ENCODE measurements at regions of chr7 and their contacts with region 1.

Region 1: DNA sequence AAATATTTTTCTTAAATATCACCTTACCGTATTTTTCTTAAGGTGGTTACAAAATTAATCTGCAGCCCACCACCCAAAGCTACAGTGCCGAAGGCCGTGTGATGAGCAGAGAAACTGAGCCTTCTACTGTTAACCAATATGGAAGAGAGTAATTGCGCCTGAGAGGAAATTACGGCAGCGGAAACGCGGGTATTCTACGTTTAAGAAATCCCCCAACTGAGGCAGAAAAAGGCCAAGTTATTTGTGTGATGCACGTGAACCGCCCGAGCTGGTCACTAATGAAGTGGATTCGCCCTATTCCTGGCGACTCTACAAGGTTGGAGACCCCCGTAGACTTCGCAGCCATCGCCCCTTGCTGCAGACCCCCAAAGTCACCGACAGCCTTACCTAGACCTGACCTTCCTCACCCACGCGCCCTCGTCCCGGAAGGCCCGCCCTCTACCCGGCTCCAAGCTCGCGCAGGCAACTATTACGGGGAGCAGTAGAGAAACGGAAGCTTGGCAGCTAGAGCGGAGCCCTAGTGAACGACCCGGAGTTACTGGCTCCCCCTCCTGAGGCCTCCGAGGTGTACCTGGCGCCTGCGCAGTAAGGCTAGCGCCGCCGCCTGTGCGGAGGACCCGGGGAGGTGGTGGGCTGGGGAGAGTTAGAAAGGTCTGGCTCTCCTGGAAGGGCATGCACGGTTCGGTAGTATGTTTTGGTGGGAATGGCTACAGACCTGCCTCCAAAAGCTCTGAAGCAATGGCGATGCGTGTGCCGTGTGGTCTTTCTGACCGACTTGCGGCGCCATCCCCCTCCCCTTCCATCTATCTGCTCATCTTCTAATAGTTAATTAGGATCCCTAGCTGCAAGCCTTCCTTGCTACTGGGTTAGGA is at the start of gene MRPS33:
- DNase-seq: peak; percentile 97
- ATAC-seq: peak; percentile 91
- H3K4me3 Mint-ChIP-seq: peak within 1 kb of the TSS; percentile 96
- H3K27ac Mint-ChIP-seq: peak within 1 kb of the TSS; percentile 99
- H3K4me1 Mint-ChIP-seq: peaks cover 32% of the 10 kb centered on the region
- H3K27me3 Mint-ChIP-seq: peaks cover 9% of the 10 kb centered on the region
- total RNA-seq, gene MRPS33: 101 to 104 TPM

Region 2: DNA sequence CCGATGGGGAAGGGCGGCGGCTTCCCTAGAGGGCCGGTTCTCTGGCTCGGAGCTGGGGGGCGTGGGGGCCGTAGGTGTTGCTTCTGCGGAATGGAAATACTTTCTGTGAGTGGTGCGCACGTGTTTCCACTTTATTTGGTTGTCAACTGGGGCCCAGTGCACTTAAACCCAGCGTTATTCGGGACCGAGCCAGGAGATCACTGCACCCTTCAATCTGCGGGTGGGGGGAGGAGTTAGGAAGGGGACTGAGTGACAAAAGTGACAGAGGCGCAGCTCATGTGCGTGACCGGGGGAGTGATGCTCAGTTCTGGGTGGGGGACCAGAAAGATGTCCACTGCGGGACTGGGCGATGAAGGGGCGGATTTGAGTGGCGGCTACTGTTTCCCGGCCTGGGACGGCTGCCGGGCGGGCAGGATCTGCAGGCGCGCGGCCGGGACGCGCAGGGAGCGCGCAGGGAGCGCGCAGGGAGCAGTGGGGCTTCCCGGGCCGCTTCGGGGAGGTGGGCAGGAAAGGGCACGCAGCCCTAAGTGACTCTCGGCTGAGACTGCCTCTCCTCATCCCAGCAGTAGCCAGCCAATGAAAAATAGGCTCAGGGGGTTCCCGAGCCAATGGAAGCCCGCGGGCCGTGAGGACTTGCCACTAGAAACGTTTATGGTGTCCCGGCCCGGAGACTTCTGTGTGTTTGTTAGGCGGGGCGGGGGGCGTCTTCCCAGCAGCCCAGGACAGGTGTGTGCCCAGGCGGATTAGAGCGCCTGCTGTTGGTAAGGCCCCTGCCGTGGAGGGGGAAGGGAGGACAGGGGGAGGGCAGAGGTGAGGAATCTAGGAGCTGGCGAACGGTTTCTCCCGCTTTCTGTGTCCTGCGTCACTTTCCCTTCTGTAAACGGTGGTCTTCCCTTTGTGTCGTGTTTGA is 783.6 kb before region 1 on chr7:
- CTCF ChIA-PET with region 1: no interaction called
- POLR2A ChIA-PET with region 1: no interaction called
- intact Hi-C with region 1: loop called in 1 of 2 experiments (anchors 1 kb)
- DNase-seq: peak; percentile 86
- ATAC-seq: peak; percentile 65
- H3K4me3 Mint-ChIP-seq: peak overlapping the region; percentile 99
- H3K27ac Mint-ChIP-seq: peak overlapping the region; percentile 99
- H3K4me1 Mint-ChIP-seq: peaks cover 45% of the 10 kb centered on the region
- H3K27me3 Mint-ChIP-seq: no peaks in the 10 kb centered on the region

Region 3: DNA sequence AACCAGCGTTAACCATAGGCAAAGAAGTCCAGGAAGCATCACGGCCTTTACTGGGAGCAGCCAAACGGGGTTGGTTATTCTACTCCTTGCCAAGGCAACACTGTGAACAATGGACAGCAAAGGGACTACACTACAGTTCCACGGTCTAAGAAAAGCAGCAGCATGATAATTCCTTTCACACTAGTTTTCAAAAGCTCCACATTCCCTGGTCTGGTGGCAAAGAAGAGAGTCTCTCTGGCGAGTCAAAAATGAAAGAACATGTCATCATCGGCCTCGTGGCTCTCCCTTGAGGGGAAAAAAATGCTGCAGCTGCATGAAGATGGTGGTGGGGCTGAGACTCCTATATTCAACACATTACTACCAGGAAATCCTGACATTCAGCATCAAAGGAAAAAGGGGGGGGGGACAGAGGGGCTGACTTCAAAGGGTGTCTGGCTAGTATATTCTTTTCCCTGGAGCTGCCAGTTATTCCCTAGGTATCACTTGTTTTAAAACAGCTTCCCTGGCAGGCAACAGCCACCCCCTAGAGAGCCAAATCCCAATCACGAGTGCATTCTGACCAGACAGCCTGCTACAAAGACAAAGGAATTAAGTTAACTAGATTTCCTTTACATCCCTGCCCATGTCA is 665.5 kb before region 1 on chr7:
- CTCF ChIA-PET with region 1: no interaction called
- POLR2A ChIA-PET with region 1: no interaction called
- intact Hi-C with region 1: no loop called
- DNase-seq: peak; percentile 18
- ATAC-seq: no peak
- H3K4me3 Mint-ChIP-seq: no peak overlapping the region
- H3K27ac Mint-ChIP-seq: peak overlapping the region; percentile 17
- H3K4me1 Mint-ChIP-seq: peaks cover 13% of the 10 kb centered on the region
- H3K27me3 Mint-ChIP-seq: no peaks in the 10 kb centered on the region

Region 4: DNA sequence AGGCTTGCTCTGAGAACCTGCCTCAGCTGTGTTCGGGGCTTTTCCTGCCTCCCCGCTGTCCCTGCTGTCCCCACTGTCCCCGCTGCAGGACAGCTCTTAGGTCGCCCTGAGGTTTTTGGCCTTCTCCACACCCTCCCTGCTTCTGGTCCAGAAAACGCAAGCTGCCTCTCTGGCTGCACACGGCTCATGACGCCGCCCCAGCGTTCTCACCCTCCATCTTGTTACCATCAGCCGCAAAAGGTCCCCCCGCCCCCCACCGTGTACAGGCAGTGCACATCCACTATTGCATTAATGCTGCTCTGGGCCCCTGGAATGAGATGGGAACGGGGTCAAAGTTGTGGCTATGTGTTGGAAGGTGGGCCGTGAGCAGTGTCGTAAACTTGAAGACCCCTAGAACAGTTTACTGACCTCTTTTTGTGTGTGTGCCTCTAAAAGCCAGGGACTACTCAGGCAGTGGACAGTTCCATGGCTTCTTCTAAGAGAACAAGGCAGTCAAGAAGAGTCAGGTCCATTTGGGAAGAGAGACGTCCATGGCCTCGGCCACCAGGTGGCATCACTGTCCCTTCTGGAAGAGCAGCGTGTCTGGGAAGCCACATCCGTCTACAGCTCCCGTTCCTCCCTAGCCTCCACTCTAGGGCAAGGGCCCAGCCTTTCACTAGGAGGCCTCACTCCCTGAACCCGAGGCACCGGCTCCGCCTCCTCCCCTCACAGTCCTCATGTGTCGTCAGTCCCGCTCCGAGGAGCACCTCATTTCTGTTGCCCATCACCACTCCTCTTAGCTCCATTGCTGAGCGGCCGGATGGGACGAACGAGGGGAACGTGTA is 497.0 kb before region 1 on chr7:
- CTCF ChIA-PET with region 1: interaction called, 6 read pairs
- POLR2A ChIA-PET with region 1: no interaction called
- intact Hi-C with region 1: loop called (anchors 1 kb)
- DNase-seq: peak; percentile 86
- ATAC-seq: peak; percentile 91
- H3K4me3 Mint-ChIP-seq: no peak overlapping the region
- H3K27ac Mint-ChIP-seq: no peak overlapping the region
- H3K4me1 Mint-ChIP-seq: peaks cover 3% of the 10 kb centered on the region
- H3K27me3 Mint-ChIP-seq: peaks cover 6% of the 10 kb centered on the region

Region 5: GRCh38 chr7:140726281-140726680 is 288.5 kb before region 1 on chr7:
- CTCF ChIA-PET with region 1: interaction called, 3 read pairs
- POLR2A ChIA-PET with region 1: no interaction called
- intact Hi-C with region 1: loop called (anchors 5 to 10 kb)
- DNase-seq: no peak
- ATAC-seq: no peak
- H3K4me3 Mint-ChIP-seq: no peak overlapping the region
- H3K27ac Mint-ChIP-seq: no peak overlapping the region
- H3K4me1 Mint-ChIP-seq: peaks cover 18% of the 10 kb centered on the region
- H3K27me3 Mint-ChIP-seq: no peaks in the 10 kb centered on the region

Region 6: DNA sequence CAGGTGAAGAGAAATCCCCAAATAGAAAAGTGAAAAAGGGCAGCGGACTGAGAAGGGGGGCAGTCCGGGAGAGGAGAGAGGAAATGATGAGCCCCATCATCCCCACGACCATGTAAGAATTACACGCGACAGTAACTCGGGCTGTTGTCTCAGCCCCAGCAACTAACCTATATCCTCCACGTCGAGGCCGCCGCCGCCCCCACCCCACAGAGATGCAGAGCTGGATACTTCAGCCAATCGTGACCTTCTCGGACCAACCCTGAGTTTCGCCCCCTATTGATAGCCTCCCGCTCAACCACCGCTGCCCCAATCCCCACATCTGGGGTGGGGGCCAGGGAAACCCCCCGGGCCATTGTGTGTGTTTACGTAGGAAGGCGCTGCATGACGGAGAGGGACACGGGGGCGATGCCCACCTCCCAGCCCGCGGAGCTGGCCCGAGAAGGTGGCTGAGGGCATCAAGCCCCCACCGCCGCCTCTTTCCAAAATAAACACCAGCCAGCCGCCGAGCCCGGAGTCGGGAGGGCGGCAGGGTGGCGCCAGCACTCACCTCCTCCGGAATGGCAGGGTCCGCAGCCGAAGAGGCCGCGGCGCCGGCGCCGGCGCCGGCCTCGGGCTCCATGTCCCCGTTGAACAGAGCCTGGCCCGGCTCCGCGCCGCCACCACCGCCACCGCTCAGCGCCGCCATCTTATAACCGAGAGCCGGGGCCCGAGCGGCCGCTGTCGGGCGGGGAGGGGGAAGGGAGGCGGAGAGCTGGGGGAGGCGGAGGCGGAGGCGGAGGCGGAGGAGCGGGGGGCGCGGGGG is 90.5 kb before region 1 on chr7:
- CTCF ChIA-PET with region 1: interaction called, 5 read pairs
- POLR2A ChIA-PET with region 1: interaction called, 3 read pairs
- intact Hi-C with region 1: loop called (anchors 1 to 2 kb)
- DNase-seq: peak; percentile 79
- ATAC-seq: peak; percentile 71
- H3K4me3 Mint-ChIP-seq: no peak overlapping the region
- H3K27ac Mint-ChIP-seq: no peak overlapping the region
- H3K4me1 Mint-ChIP-seq: peaks cover 9% of the 10 kb centered on the region
- H3K27me3 Mint-ChIP-seq: no peaks in the 10 kb centered on the region

Region 7: DNA sequence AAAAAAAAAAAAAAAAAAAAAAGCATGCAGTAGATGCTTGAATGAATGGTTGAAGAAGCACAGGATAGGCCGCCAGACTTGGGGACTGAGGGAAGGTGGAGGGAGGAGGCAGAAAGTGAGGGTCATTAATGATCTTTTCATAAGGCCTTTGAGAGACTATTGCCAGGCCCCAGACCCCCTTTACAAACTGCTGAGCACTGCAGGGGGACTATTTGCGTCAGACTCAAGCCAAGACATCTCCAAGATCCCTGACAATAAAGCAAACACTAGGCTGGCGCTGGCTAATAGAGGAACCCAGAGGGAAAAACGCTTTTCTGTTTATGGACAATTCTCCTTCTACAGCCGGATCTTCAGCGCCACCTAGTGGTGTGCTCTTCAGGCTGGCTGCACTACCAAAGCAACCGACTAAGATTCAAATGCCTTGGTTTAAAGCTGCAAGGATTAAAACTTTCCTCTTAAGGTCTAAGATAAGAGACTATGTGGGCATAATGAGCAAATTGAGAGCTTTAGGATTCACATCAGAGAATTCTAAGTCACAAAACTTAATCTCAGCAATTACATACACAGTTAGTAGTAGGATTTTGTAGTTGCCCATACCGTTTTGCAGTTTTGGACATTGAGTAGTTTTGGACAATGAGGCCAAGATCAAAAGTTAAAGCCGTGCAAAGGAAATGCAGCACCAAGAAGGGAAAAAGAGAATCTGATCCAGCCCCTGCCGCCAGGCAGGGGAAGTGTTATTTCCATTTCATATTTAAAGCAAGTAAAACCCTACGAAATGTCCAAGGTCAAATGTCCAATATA is 518.6 kb after region 1 on chr7:
- CTCF ChIA-PET with region 1: no interaction called
- POLR2A ChIA-PET with region 1: no interaction called
- intact Hi-C with region 1: loop called in 1 of 2 experiments (anchors 5 kb)
- DNase-seq: peak; percentile 79
- ATAC-seq: no peak
- H3K4me3 Mint-ChIP-seq: no peak overlapping the region
- H3K27ac Mint-ChIP-seq: no peak overlapping the region
- H3K4me1 Mint-ChIP-seq: no peaks in the 10 kb centered on the region
- H3K27me3 Mint-ChIP-seq: peaks cover 30% of the 10 kb centered on the region